GM10248 (cell line): ENCODE measurements at regions of chr7 and their contacts with region 1.

Region 1: DNA sequence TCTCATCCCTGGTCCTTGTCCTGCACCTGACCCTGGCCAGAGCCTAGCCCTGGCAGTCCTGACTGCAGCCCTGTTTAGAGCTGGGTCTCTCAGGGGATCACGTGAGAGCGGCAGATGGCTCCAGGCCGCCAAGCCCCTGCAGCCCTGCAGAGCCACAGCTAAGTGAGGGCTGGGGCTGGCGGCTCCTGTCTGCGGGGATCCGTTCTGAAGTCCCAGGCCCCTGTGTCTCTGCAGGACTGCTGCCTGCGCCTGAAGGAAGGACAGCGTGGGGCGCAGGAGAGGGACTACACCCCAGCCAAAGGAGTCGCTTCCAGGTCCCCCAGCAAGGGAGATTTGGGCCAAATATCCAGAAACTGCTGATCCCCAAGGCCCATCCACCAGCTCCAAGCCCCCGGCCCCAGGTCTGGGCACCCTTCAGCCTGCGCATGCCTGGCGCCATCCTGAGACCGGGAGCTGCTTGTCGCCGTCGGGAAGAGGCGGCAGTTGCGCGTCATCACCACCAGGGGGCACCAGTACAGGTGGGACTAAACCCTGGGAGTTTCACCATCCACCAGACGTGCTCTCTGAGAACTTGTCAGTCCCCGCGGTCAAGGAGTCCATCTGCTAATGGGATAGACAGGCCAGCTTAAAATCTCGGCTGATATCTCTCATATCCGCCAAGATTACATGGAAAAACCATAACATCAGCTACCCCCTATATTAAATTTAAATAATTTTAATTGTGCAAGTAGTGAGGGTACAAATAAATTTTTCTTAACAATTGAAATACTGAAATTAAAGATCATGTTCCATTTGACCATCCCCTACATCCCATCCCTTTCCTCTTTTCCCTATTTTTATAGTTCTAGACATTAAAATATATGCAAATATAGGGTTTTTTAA is 25.1 kb upstream of the GHRHR start:
- DNase-seq: peak; percentile 86
- CTCF ChIP-seq: peak; percentile 95

Region 2: GRCh38 chr7:29866490-29866930 is 1072.2 kb before region 1 on chr7:
- CTCF ChIA-PET with region 1: no interaction called
- POLR2A ChIA-PET with region 1: no interaction called
- DNase-seq: no peak
- CTCF ChIP-seq: no peak

Region 3: GRCh38 chr7:30920584-30921539 is 17.8 kb before region 1 on chr7:
- CTCF ChIA-PET with region 1: interaction called, 23 read pairs
- POLR2A ChIA-PET with region 1: no interaction called
- DNase-seq: no peak
- CTCF ChIP-seq: no peak

Region 4: GRCh38 chr7:30950197-30950596 is 11.5 kb after region 1 on chr7:
- CTCF ChIA-PET with region 1: interaction called, 30 read pairs
- POLR2A ChIA-PET with region 1: no interaction called
- DNase-seq: no peak
- CTCF ChIP-seq: no peak

Region 5: GRCh38 chr7:30974605-30975255 is 36.1 kb after region 1 on chr7:
- CTCF ChIA-PET with region 1: interaction called, 56 read pairs
- POLR2A ChIA-PET with region 1: no interaction called
- DNase-seq: peak; percentile 91
- CTCF ChIP-seq: peak; percentile 76

Region 6: GRCh38 chr7:30988351-30989000 is 49.8 kb after region 1 on chr7:
- CTCF ChIA-PET with region 1: interaction called, 21 read pairs
- POLR2A ChIA-PET with region 1: no interaction called
- DNase-seq: no peak
- CTCF ChIP-seq: no peak